GM12878 (cell line): ENCODE measurements at regions of chr3 and their contacts with region 1.

Region 1: DNA sequence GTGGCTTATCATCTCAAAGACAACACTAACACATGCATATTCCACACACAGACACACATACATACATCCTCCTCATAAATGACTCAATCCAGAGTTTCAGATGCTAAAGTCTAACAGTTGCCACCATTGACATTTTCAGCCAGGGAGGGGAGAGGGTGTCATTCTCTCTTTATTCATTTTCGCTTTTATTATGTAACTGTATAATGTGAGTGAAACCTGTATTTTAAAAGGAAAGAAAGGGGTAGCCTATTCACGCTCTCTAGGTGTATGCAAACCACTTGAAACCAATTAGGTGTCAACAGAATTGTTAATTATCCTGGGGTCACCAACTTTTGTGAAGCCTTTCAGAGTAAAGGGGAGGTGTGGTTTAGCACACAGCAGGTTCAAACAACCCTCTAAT is 1282.9 kb downstream of the ROBO2 start:
- DNase-seq: peak; percentile 17
- ATAC-seq: peak; percentile 98
- H3K4me3 ChIP-seq: no peak overlapping the region
- H3K27ac ChIP-seq: no peak overlapping the region
- H3K4me1 ChIP-seq: no peaks in the 10 kb centered on the region
- H3K27me3 ChIP-seq: no peaks in the 10 kb centered on the region
- CTCF ChIP-seq: no peak
- EP300 ChIP-seq: peak in 1 of 2 experiments; percentile 52; a peak in 2 of 4 replicates
- POLR2A ChIP-seq: no peak
- RAD21 ChIP-seq: no peak

Region 2: GRCh38 chr3:78277801-78278200 is 45.0 kb before region 1 on chr3:
- CTCF ChIA-PET with region 1: no interaction called
- POLR2A ChIA-PET with region 1: no interaction called
- RAD21 ChIA-PET with region 1: no interaction called
- SMC1A ChIA-PET with region 1: no interaction called
- in situ Hi-C with region 1: no loop called
- intact Hi-C with region 1: loop called (anchors 5 kb)
- DNase-seq: no peak
- ATAC-seq: peak; percentile 65
- H3K4me3 ChIP-seq: no peak overlapping the region
- H3K27ac ChIP-seq: no peak overlapping the region
- H3K4me1 ChIP-seq: peaks cover 7% of the 10 kb centered on the region
- H3K27me3 ChIP-seq: no peaks in the 10 kb centered on the region; a peak in 1 of 4 replicates
- CTCF ChIP-seq: no peak
- EP300 ChIP-seq: no peak
- POLR2A ChIP-seq: no peak
- RAD21 ChIP-seq: no peak

Region 3: DNA sequence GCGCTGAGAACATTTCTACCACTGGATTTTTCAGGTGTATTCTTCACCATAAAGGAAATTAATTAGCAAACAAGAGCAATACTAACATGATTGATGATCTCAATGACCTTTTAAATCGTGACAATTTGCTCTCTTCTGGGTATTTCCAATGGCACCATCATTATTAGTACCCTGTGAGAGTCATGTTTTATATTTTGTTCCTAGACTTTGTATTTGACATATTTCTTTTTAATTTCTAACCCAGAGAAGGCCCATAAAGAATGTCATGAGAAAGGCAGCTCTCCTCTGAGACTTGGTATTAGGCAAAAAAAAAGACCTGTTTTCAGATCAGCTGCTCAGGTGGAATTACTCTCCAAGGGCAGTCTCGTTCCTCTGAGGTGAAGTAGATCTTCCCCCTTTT is 29.5 kb before region 1 on chr3:
- CTCF ChIA-PET with region 1: no interaction called
- POLR2A ChIA-PET with region 1: no interaction called
- RAD21 ChIA-PET with region 1: no interaction called
- SMC1A ChIA-PET with region 1: no interaction called
- in situ Hi-C with region 1: no loop called
- intact Hi-C with region 1: no loop called
- DNase-seq: no peak
- ATAC-seq: no peak
- H3K4me3 ChIP-seq: no peak overlapping the region
- H3K27ac ChIP-seq: no peak overlapping the region
- H3K4me1 ChIP-seq: no peaks in the 10 kb centered on the region
- H3K27me3 ChIP-seq: no peaks in the 10 kb centered on the region
- CTCF ChIP-seq: no peak
- EP300 ChIP-seq: no peak
- POLR2A ChIP-seq: no peak
- RAD21 ChIP-seq: no peak